CD8-positive, alpha-beta T cell (primary cell): ENCODE measurements at regions of chr3 and their contacts with region 1.

Region 1: GRCh38 chr3:130746246-130747039 is at the start of gene PIK3R4:
- DNase-seq: peak; percentile 85 to 99 (median 94)
- ATAC-seq: peak; percentile 80
- H3K4me3 ChIP-seq: peak within 1 kb of the TSS; percentile 75 to 95
- H3K4me3 Mint-ChIP-seq: peak within 1 kb of the TSS; percentile 87
- H3K27ac ChIP-seq: peak within 1 kb of the TSS; percentile 89 to 94
- H3K27ac Mint-ChIP-seq: peak within 1 kb of the TSS; percentile 92
- H3K4me1 ChIP-seq: peaks cover 35% of the 10 kb centered on the region
- H3K4me1 Mint-ChIP-seq: peaks cover 52% of the 10 kb centered on the region
- H3K27me3 ChIP-seq: no peaks in the 10 kb centered on the region
- H3K27me3 Mint-ChIP-seq: no peaks in the 10 kb centered on the region
- CTCF ChIP-seq: no peak
- total RNA-seq, gene PIK3R4: 12.1 to 14.8 TPM

Region 2: DNA sequence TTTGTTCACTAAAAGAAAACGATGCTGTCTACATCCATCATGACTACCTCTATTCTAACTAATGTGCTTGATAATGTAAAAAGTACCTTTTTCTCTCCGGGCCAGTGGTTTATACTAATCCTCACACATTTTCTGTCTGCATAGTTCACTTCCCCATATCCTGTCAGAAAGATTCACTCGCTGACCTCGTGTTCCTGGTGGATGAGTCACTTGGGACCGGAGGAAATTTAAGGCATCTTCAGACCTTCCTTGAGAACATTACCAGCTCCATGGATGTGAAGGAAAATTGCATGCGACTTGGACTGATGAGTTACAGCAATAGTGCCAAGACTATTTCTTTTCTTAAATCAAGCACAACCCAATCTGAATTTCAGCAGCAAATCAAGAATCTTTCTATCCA is 367.2 kb before region 1 on chr3:
- CTCF ChIA-PET with region 1: no interaction called
- POLR2A ChIA-PET with region 1: no interaction called
- intact Hi-C with region 1: no loop called
- DNase-seq: no peak
- ATAC-seq: no peak
- H3K4me3 ChIP-seq: no peak overlapping the region
- H3K4me3 Mint-ChIP-seq: no peak overlapping the region
- H3K27ac ChIP-seq: no peak overlapping the region
- H3K27ac Mint-ChIP-seq: no peak overlapping the region
- H3K4me1 ChIP-seq: no peaks in the 10 kb centered on the region
- H3K4me1 Mint-ChIP-seq: no peaks in the 10 kb centered on the region
- H3K27me3 ChIP-seq: no peaks in the 10 kb centered on the region
- H3K27me3 Mint-ChIP-seq: peaks cover 5% of the 10 kb centered on the region
- CTCF ChIP-seq: no peak

Region 3: GRCh38 chr3:130759699-130760338 is 13.4 kb after region 1 on chr3:
- CTCF ChIA-PET with region 1: interaction called, 10 read pairs
- POLR2A ChIA-PET with region 1: no interaction called
- intact Hi-C with region 1: no loop called
- DNase-seq: peak in 8 of 9 experiments; percentile 16 to 72 (median 54)
- ATAC-seq: peak; percentile 66
- H3K4me3 ChIP-seq: no peak overlapping the region
- H3K4me3 Mint-ChIP-seq: no peak overlapping the region
- H3K27ac ChIP-seq: no peak overlapping the region
- H3K27ac Mint-ChIP-seq: no peak overlapping the region
- H3K4me1 ChIP-seq: no peaks in the 10 kb centered on the region
- H3K4me1 Mint-ChIP-seq: no peaks in the 10 kb centered on the region
- H3K27me3 ChIP-seq: no peaks in the 10 kb centered on the region
- H3K27me3 Mint-ChIP-seq: peaks cover 7% of the 10 kb centered on the region
- CTCF ChIP-seq: peak; percentile 93

Region 4: DNA sequence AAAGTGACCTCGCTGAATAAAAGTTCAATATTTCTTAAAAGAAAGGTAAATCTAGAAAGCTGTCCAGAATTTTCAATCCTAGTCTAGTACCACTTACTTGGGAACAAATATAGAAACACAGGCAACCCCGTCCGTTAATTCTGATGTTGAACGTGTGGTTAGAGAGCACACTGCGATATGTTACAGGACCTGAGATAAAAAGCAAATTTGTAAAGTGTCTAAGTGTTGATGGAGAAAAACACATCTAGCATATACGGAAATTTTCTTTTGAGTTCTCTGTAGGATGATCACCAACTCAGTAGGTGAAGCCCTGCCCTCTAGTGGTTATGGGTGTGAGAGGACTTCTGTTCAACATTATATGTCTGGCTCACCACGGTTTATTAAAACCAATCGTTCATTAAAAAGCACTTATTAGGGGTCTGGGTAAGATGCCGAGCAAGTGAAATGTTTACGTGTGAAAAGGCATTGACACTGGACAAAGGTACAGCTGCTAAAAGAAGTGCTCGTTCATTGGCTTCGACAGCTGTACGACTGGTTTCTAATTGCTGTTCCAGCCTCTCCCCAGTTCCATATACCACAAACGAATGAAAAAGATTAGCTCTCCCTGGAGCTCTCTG is 146.4 kb after region 1 on chr3:
- CTCF ChIA-PET with region 1: interaction called, 5 read pairs
- POLR2A ChIA-PET with region 1: interaction called, 8 read pairs
- intact Hi-C with region 1: loop called in 1 of 2 experiments (anchors 1 kb)
- DNase-seq: peak; percentile 21 to 89 (median 61)
- ATAC-seq: peak; percentile 63
- H3K4me3 ChIP-seq: peak overlapping the region; percentile 68 to 80
- H3K4me3 Mint-ChIP-seq: peak overlapping the region; percentile 98
- H3K27ac ChIP-seq: peak overlapping the region; percentile 86 to 87
- H3K27ac Mint-ChIP-seq: peak overlapping the region; percentile 99
- H3K4me1 ChIP-seq: peaks cover 27% of the 10 kb centered on the region
- H3K4me1 Mint-ChIP-seq: peaks cover 33% of the 10 kb centered on the region
- H3K27me3 ChIP-seq: no peaks in the 10 kb centered on the region
- H3K27me3 Mint-ChIP-seq: no peaks in the 10 kb centered on the region
- CTCF ChIP-seq: peak; percentile 87

Region 5: GRCh38 chr3:131381444-131382291 is 635.2 kb after region 1 on chr3 and contains the start of gene NUDT16:
- CTCF ChIA-PET with region 1: no interaction called
- POLR2A ChIA-PET with region 1: no interaction called
- intact Hi-C with region 1: loop called (anchors 5 kb)
- DNase-seq: peak; percentile 92 to 97 (median 95)
- ATAC-seq: peak; percentile 96
- H3K4me3 ChIP-seq: peak within 1 kb of the TSS; percentile 86 to 94
- H3K4me3 Mint-ChIP-seq: peak within 1 kb of the TSS; percentile 96
- H3K27ac ChIP-seq: peak within 1 kb of the TSS; percentile 45 to 64
- H3K27ac Mint-ChIP-seq: peak within 1 kb of the TSS; percentile 91
- H3K4me1 ChIP-seq: peaks cover 13% of the 10 kb centered on the region
- H3K4me1 Mint-ChIP-seq: peaks cover 31% of the 10 kb centered on the region
- H3K27me3 ChIP-seq: no peaks in the 10 kb centered on the region
- H3K27me3 Mint-ChIP-seq: no peaks in the 10 kb centered on the region
- CTCF ChIP-seq: no peak
- total RNA-seq, gene NUDT16: 3.1 to 3.5 TPM